ENCODE measurements at regions of chr1 and their contacts with region 1.

Region 1: DNA sequence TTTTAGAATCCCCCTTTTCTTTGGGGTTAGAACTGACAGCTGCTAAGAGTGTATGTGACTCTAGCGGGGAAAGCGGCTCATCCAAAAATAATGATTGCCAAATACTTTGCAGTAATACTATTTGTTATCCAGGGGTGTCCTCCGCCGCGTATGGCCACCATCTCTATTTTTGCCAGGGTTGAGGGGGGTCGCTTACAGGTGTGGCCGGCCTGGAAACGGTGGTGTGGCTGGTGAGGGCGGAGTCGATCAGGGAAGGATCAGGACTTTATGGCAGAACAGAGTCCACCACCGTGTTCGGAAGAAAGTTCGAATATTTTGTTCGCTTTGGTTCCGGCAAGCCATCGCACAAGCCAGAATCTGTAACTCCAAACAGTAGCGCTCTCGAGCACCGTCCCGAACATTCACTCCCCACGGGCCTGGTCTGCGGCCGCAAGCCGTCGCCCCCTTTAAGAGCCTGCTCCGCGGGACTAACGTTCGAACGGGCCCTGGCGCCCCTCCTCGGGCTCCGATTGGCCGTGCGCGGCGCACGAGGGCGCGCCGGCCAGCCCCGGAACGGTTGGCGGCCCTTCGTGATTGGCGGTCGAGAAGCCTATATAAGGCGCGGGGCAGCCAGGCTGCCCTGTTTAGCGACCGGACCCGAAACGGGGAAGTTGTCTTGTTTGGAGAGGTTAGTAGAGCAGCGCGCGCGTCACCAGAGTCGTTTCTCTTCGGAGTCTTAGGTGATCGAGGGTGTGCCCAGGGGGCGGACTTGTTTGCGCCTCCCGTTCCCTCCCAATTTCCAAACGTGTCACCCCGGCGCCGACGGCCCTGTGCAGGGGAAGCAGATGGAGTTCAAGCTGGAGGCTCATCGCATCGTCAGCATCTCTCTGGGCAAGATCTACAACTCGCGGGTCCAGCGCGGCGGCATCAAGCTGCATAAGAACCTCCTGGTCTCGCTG is at the start of gene IER5:
- DNase-seq: peak; percentile 91
- ATAC-seq: peak; percentile 66
- H3K4me3 Mint-ChIP-seq: peak within 1 kb of the TSS; percentile 99
- H3K27ac Mint-ChIP-seq: peak within 1 kb of the TSS; percentile 98
- H3K4me1 Mint-ChIP-seq: peaks cover 58% of the 10 kb centered on the region
- H3K27me3 Mint-ChIP-seq: no peaks in the 10 kb centered on the region
- CTCF ChIP-seq: no peak
- total RNA-seq, gene IER5: 155 and 156 TPM in 2 replicates

Region 2: GRCh38 chr1:179327679-179328078 is 1760.7 kb before region 1 on chr1:
- CTCF ChIA-PET with region 1: no interaction called
- POLR2A ChIA-PET with region 1: no interaction called
- intact Hi-C with region 1: no loop called
- DNase-seq: no peak
- ATAC-seq: no peak
- H3K4me3 Mint-ChIP-seq: no peak overlapping the region
- H3K27ac Mint-ChIP-seq: no peak overlapping the region
- H3K4me1 Mint-ChIP-seq: no peaks in the 10 kb centered on the region
- H3K27me3 Mint-ChIP-seq: no peaks in the 10 kb centered on the region
- CTCF ChIP-seq: no peak

Region 3: GRCh38 chr1:180515864-180516388 is 572.4 kb before region 1 on chr1:
- CTCF ChIA-PET with region 1: interaction called, 5 read pairs
- POLR2A ChIA-PET with region 1: no interaction called
- intact Hi-C with region 1: loop called (anchors 5 kb)
- DNase-seq: no peak
- ATAC-seq: peak; percentile 89
- H3K4me3 Mint-ChIP-seq: no peak overlapping the region
- H3K27ac Mint-ChIP-seq: no peak overlapping the region
- H3K4me1 Mint-ChIP-seq: no peaks in the 10 kb centered on the region
- H3K27me3 Mint-ChIP-seq: peaks cover 8% of the 10 kb centered on the region
- CTCF ChIP-seq: no peak

Region 4: DNA sequence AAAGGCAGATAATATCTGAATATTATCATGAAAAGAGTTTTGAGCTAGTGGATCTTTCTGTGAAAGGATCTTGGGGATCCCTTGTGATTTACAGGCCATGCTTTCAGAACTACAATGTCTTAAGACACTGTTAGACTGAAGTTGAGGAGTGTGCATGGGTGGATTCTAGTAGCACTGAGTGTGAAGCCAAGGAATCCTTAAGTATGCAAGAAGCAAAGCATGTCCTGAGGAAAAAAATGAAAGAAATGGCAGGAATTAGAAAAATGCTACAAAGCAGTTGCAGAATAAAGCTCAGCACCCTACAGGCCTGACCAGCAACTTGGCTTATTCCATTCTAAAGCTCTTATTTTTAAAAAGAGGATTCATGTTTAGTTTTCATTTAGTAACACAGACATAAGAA is 77.6 kb before region 1 on chr1:
- CTCF ChIA-PET with region 1: no interaction called
- POLR2A ChIA-PET with region 1: no interaction called
- intact Hi-C with region 1: no loop called
- DNase-seq: no peak
- ATAC-seq: no peak
- H3K4me3 Mint-ChIP-seq: no peak overlapping the region
- H3K27ac Mint-ChIP-seq: no peak overlapping the region
- H3K4me1 Mint-ChIP-seq: peaks cover 30% of the 10 kb centered on the region
- H3K27me3 Mint-ChIP-seq: no peaks in the 10 kb centered on the region
- CTCF ChIP-seq: no peak

Region 5: GRCh38 chr1:181021811-181022434 is 66.4 kb before region 1 on chr1:
- CTCF ChIA-PET with region 1: no interaction called
- POLR2A ChIA-PET with region 1: interaction called, 60 read pairs
- intact Hi-C with region 1: loop called (anchors 1 kb)
- DNase-seq: no peak
- ATAC-seq: peak; percentile 37
- H3K4me3 Mint-ChIP-seq: peak overlapping the region; percentile 96
- H3K27ac Mint-ChIP-seq: peak overlapping the region; percentile 94
- H3K4me1 Mint-ChIP-seq: peaks cover 40% of the 10 kb centered on the region
- H3K27me3 Mint-ChIP-seq: no peaks in the 10 kb centered on the region
- CTCF ChIP-seq: no peak

Region 6: GRCh38 chr1:181062836-181063428 is 25.4 kb before region 1 on chr1:
- CTCF ChIA-PET with region 1: interaction called, 8 read pairs
- POLR2A ChIA-PET with region 1: interaction called, 68 read pairs
- intact Hi-C with region 1: loop called (anchors 1 kb)
- DNase-seq: no peak
- ATAC-seq: peak; percentile 69
- H3K4me3 Mint-ChIP-seq: peak overlapping the region; percentile 79
- H3K27ac Mint-ChIP-seq: peak overlapping the region; percentile 92
- H3K4me1 Mint-ChIP-seq: peaks cover 34% of the 10 kb centered on the region
- H3K27me3 Mint-ChIP-seq: no peaks in the 10 kb centered on the region
- CTCF ChIP-seq: no peak

Region 7: DNA sequence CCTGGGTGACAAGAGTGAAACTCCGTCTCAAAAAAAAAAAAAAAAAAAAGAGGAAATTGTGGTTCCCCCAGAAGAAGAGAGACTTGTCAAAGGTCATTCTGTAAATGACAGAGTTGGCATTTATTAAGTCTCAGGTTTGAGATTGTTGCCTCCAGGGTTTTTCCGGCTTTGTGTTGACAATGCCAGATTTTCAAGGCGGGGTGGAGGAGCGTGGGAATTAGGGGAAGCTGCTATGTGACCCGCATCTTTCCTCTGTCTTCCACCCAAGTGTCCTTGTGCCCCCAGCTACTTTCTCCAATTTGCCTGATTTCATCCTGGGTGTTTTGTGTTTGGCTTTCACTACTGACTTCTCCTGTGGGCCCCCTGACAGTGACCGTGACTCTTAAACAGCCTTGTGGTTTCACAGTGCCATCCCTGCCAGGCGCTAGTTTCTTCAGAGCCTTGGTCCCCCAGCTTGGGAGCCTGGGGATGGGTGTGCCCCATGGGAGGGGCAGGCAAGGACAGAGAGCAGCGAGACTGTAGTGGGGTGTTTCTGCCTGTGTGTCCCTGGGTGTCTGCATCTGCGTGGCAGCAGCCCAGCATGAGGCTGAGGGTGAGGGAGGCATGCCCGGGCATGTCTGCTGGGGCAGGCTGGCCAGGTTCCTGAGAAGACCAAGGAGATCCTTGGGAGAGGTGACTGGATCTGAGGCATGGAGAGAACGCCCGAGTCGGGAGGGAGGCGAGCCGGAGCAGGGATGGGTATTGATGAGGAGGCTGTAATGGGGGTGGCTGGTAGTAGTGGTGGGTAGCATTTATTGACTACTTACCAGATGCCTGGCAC is 46.4 kb after region 1 on chr1:
- CTCF ChIA-PET with region 1: interaction called, 194 read pairs
- POLR2A ChIA-PET with region 1: interaction called, 1,783 read pairs
- intact Hi-C with region 1: loop called (anchors 1 kb)
- DNase-seq: peak; percentile 63
- ATAC-seq: peak; percentile 49
- H3K4me3 Mint-ChIP-seq: peak overlapping the region; percentile 84
- H3K27ac Mint-ChIP-seq: peak overlapping the region; percentile 99
- H3K4me1 Mint-ChIP-seq: peaks cover 94% of the 10 kb centered on the region
- H3K27me3 Mint-ChIP-seq: no peaks in the 10 kb centered on the region
- CTCF ChIP-seq: no peak

Region 8: DNA sequence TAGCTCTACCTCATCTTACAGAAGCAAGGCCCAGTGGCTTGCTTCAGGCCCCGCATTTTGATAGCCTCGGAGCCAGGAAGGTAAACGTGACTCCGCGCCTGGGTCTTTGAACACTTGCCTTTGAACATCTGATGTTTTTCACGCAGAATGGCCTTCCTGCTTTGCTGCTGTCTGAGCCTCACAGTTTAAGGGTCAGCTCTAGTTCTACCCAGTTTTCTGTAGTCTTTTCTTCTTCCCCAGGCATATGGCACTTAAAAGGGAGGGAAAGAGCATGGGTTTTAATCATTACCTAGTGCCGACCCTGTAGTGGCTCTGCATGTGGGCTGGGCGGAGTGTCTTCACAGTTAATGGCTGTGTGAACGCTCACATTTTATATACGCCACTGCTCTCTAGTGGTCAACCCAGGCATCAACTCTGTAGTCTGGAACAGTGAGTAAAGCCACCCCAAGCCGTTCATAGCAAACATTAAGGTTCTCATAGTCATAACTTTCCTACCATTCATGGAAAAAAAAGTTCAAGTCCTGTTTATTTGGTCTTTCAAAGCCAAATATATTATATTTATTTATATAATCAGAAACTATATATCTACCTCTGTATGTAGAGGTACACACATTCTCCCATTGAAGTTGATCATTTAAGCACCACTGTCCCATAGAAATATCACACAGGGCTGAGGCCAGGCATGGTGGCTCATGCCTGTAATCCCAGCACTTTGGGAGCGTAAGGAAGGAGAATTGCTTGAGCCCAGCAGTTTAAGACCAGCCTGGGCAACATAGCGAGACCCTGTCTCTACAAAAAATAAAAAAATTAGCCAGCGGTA is 78.2 kb after region 1 on chr1:
- CTCF ChIA-PET with region 1: interaction called, 13 read pairs
- POLR2A ChIA-PET with region 1: interaction called, 6 read pairs
- intact Hi-C with region 1: loop called (anchors 1 kb)
- DNase-seq: peak; percentile 29
- ATAC-seq: peak; percentile 100
- H3K4me3 Mint-ChIP-seq: no peak overlapping the region
- H3K27ac Mint-ChIP-seq: no peak overlapping the region
- H3K4me1 Mint-ChIP-seq: peaks cover 3% of the 10 kb centered on the region
- H3K27me3 Mint-ChIP-seq: peaks cover 2% of the 10 kb centered on the region
- CTCF ChIP-seq: peak; percentile 74

Measured in activated B cell treated with CpG ODN at 0.5 μM for 24 hours (primary cell).